HAP-1 (cell line): ENCODE measurements at regions of chr11 and their contacts with region 1.

Region 1: DNA sequence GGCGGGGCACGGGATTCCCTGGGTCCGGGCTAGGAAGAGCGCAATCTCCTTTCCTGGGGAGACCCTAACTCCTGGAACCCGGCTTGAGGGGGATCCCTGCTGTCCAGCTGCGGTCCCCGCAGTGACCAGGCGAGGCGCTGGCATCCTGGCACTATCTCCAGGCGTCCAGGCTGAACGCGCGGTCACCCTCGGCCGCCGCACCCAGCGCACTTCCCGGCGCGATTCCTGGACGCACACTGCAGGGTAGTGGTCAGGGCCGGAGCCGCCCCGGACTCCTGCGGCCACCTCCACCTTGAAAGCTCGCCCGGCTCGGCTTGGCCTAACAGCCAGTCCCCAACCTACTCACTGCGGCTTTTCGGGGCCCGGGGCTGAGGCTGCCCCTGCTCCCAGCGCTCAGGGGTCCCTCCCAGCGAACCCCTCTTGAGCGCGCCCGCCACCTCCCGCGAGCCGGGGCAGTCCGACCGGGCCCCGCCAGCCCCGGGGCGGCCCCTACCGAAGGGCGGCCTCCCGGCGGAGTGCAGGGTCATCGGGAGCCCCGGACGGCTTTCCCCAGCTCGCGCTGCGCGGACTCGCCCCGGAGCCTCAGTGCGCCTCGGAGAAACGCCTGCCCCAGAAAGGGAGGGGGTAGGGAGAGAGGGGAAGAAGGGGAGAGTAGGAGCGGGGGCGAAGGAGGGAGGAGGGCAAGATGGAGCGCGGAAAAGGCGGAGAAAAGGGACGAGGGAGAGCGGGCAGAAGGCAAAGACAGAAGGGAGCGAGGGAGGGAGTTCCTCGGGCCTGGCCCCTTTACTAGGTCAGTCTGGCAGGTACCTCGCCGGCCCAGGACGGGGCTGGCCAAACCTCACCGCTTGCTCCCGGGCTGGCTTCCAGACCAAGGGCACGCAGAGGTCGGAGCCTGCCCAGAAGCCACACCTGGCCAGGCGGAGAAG is 1.0 kb downstream of the POU2AF3 start:
- DNase-seq: no peak
- H3K4me3 ChIP-seq: no peak overlapping the region
- H3K4me1 ChIP-seq: no peaks in the 10 kb centered on the region
- H3K27me3 ChIP-seq: peaks cover 18% of the 10 kb centered on the region

Region 2: DNA sequence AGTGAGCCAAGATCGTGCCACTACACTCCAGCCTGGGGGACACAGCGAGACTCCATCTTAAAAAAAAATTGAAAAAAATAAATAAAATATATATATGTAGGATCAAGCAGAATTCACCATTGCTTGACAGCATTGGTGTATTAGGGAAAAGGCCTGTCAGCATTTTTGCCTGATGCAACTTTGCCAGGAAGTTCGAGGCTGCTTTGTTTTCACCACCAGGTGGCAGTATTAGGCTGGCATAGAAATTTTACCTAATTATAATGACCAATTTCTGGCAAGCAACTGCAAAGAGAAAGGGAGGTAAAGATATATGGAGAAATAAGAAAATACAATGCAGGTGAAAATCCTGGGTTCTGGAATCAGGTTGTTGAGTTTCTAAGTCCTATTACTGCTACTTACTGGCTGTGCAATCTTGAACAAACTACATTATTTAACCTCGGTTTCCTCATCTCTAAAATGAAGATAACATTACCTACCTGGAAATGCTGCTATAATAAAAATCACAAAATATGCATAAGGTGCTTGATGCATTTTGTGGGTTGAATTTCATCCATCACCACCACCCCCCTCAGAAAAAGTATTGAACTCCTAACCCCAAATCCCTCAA is 265.9 kb after region 1 on chr11:
- in situ Hi-C with region 1: loop called (anchors 25 kb)
- DNase-seq: peak; percentile 45 to 78
- H3K4me3 ChIP-seq: no peak overlapping the region
- H3K4me1 ChIP-seq: no peaks in the 10 kb centered on the region
- H3K27me3 ChIP-seq: no peaks in the 10 kb centered on the region

Region 3: DNA sequence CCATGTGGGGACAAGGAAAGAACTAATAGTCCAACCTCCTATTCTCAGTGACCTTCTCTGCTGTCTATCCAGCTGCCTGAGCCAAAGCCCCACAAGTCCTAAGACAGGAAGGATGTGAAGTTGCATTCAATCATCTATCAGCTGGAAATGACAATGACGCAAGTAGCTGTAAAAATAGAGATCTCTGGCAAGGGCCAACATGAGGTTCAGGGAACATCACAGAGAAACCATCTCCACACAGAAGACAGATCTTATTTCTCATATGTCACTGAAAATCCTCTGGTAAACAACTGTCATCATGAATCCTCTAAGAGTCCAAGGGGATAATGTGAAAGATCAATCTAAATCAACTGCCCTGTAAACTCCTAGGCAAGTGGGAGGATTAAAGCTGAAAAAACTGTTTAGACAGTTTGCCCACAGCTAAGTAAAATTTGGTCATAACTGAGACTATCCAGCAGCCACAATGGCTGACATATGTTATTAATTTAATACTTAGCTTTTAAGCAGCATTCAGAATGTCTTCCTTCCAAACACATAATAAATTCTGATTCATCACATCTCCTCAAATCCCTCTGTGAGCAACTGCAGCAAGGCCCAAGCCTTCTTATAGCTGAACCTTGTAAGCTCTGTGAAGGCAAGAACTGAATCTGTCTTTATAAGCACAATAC is 519.9 kb after region 1 on chr11:
- in situ Hi-C with region 1: loop called (anchors 25 kb)
- DNase-seq: no peak
- H3K4me3 ChIP-seq: no peak overlapping the region
- H3K4me1 ChIP-seq: peaks cover 14% of the 10 kb centered on the region
- H3K27me3 ChIP-seq: no peaks in the 10 kb centered on the region